PC-9 (cell line): ENCODE measurements at regions of chr6 and their contacts with region 1.

Region 1: GRCh38 chr6:36094753-36095496 is 35.4 kb upstream of the MAPK13 start:
- DNase-seq: peak; percentile 66
- H3K4me3 ChIP-seq: no peak overlapping the region
- H3K27ac ChIP-seq: peak overlapping the region; percentile 35
- H3K4me1 ChIP-seq: no peaks in the 10 kb centered on the region; the same call in 1 of the 2 replicates
- H3K27me3 ChIP-seq: no peaks in the 10 kb centered on the region
- CTCF ChIP-seq: peak; percentile 97

Region 2: DNA sequence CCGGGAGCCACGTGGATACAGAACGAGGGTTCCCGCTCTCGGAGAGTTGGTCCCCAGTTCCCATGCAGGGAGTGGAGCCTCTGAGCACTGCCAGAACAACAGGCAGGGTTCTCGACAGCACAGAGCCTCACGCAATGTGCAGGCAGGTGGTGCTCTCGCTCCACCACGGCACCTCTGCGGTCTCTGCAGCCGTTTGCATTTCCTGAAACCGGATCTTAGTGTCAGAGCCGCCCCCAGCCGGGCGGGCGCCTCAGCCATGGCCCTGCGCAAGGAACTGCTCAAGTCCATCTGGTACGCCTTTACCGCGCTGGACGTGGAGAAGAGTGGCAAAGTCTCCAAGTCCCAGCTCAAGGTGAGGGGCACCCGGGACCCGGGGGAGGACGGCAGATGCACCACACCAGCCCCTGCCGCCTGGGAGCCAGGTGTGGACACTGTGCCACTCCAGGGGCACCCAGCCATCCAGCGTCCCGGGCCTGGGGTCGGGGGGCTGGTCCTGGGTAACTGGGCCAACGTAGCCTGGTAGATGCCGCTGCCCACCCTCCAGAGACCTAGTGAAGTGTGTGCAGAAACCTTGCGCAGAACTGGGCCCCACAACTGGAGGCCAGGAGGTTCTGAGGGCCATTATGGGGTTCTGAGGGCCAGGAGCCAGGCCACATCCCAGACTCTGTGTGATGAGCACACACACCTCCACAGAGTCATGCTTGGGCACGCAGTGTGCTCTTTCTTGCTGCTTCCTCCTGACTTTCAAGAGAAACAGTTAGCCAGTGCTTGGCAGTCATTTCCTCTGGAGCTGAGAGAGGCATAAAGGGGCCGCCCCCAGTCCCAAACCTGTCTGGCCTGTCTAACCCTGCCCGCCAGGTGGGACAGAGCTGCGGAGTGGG is 797.1 kb before region 1 on chr6 and contains the start of gene DEF6:
- CTCF ChIA-PET with region 1: no interaction called
- POLR2A ChIA-PET with region 1: no interaction called
- intact Hi-C with region 1: loop called (anchors 10 kb)
- DNase-seq: peak; percentile 87
- H3K4me3 ChIP-seq: peak within 1 kb of the TSS; percentile 66
- H3K27ac ChIP-seq: no peak within 1 kb of the TSS
- H3K4me1 ChIP-seq: peaks cover 23% of the 10 kb centered on the region
- H3K27me3 ChIP-seq: no peaks in the 10 kb centered on the region
- CTCF ChIP-seq: peak; percentile 85
- total RNA-seq, gene DEF6: 19.6 and 27.0 TPM in 2 replicates

Region 3: GRCh38 chr6:35522660-35523658 is 572.0 kb before region 1 on chr6:
- CTCF ChIA-PET with region 1: no interaction called
- POLR2A ChIA-PET with region 1: no interaction called
- intact Hi-C with region 1: loop called (anchors 10 kb)
- DNase-seq: peak; percentile 45 to 69
- H3K4me3 ChIP-seq: no peak overlapping the region
- H3K27ac ChIP-seq: no peak overlapping the region
- H3K4me1 ChIP-seq: 0 out of 2 replicates have a peak, but pooled peaks cover 12% of the 10 kb centered on the region
- H3K27me3 ChIP-seq: no peaks in the 10 kb centered on the region
- CTCF ChIP-seq: peak; percentile 96

Region 4: DNA sequence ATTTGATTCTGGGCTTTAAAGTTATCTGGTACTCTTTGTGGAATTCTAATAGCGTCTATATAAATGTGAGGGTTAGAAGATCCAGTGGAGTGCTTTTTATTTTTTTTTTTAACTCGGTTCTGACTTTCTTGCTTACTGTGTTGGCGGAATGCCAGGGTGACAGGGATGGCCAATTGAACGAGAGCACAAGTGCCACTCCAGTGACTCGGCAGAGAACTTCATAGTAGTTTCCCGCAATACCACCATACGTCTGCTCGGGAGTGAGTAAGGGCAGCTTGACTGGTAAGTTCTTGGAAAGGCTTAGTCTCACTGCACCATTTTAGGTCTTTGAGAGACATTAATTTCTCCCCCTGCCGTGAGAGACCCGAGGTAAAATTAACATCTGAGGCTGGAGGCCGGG is 532.9 kb before region 1 on chr6:
- CTCF ChIA-PET with region 1: no interaction called
- POLR2A ChIA-PET with region 1: no interaction called
- intact Hi-C with region 1: no loop called
- DNase-seq: no peak
- H3K4me3 ChIP-seq: no peak overlapping the region
- H3K27ac ChIP-seq: no peak overlapping the region
- H3K4me1 ChIP-seq: no peaks in the 10 kb centered on the region
- H3K27me3 ChIP-seq: 0 out of 2 replicates have a peak, but pooled peaks cover 11% of the 10 kb centered on the region
- CTCF ChIP-seq: no peak

Region 5: DNA sequence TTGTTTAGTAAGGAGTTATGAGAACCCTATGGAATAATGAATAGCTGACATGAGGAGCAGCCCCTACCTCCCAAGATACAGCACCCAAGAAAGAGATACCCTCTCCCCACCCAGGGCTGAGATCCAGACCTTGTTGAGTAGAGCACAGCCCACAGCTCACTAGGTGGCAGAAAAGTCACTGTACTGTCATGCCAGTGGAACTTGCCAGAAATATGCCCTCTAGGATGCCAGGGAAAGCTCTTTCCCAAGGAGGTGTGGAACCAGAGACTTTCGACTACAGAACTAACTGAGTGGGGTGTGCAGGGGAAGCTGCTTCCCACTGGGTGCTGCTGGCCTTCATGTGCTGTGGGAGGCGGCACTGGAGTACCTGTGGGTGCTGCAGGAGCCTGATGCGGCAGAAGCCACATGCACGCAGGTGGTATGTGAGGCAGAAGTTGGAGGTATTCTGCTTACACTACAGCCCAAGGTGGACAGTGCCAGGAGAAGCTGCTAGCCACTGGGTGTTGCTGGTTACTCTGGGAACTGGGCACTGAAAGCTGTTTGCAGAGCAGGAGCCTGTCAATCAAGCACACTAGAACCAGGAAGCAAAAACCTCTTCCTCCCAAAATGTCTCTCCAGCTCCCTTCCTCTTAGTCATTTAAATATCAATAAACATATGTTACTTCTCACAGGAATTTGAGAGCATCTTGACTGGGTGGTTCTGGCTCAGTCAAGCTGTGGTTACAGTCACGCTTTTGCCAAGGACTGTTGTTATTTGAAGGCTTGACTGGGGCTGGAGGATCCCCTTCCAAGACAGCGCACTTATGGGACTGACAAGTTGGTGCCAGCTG is 340.3 kb before region 1 on chr6:
- CTCF ChIA-PET with region 1: no interaction called
- POLR2A ChIA-PET with region 1: no interaction called
- intact Hi-C with region 1: loop called (anchors 5 kb)
- DNase-seq: peak; percentile 40 to 84
- H3K4me3 ChIP-seq: no peak overlapping the region
- H3K27ac ChIP-seq: no peak overlapping the region
- H3K4me1 ChIP-seq: peaks cover 13% of the 10 kb centered on the region
- H3K27me3 ChIP-seq: no peaks in the 10 kb centered on the region
- CTCF ChIP-seq: no peak; the same call in 1 of the 2 replicates